ENCODE measurements at regions of chr20 and their contacts with region 1.

Region 1: GRCh38 chr20:46132705-46133120 is 14.6 kb downstream of the CD40 start:
- DNase-seq: peak; percentile 73
- H3K4me3 Mint-ChIP-seq: no peak overlapping the region
- H3K27ac Mint-ChIP-seq: no peak overlapping the region
- H3K4me1 Mint-ChIP-seq: no peaks in the 10 kb centered on the region
- H3K27me3 Mint-ChIP-seq: peaks cover 25% of the 10 kb centered on the region

Region 2: GRCh38 chr20:45545754-45546453 is 586.8 kb before region 1 on chr20:
- CTCF ChIA-PET with region 1: no interaction called
- POLR2A ChIA-PET with region 1: no interaction called
- intact Hi-C with region 1: no loop called
- DNase-seq: no peak
- H3K4me3 Mint-ChIP-seq: no peak overlapping the region
- H3K27ac Mint-ChIP-seq: no peak overlapping the region
- H3K4me1 Mint-ChIP-seq: no peaks in the 10 kb centered on the region
- H3K27me3 Mint-ChIP-seq: peaks cover 29% of the 10 kb centered on the region

Region 3: DNA sequence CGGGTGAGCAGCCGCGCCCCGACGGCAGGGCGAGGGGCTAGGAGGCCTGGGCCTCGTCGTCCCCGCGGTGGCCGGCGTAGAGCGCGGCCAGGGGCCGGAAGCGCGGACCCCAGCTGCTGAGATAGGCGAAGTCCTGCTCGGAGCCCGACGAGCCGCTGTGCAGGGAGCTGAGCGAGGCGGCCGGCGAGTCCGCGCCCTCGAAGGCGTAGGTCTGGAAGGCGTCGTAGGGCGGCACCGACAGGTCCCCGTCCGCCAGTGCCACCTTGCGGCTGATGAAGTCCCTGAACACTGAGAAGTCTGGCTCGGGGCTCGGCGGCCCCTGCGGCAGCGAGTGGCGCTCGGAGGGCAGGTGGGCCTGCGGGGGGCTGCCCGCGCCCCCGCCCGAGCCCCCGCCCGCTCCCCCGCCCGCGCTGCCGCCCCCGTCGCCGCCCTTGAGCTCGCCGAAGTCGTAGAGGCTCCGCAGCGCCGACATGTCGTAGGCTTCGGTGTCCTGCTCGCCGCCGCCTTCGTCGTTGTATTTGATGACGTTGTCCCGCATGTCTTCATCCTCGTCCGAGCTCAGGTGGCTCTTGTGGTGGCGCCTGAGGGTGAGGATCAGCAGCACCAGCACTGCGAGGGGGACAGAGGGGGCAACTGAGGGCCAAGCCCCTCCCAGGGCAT is 41.9 kb after region 1 on chr20:
- CTCF ChIA-PET with region 1: interaction called, 34 read pairs
- POLR2A ChIA-PET with region 1: no interaction called
- intact Hi-C with region 1: no loop called
- DNase-seq: peak; percentile 78
- H3K4me3 Mint-ChIP-seq: no peak overlapping the region
- H3K27ac Mint-ChIP-seq: no peak overlapping the region
- H3K4me1 Mint-ChIP-seq: peaks cover 2% of the 10 kb centered on the region
- H3K27me3 Mint-ChIP-seq: peaks cover 42% of the 10 kb centered on the region

Region 4: GRCh38 chr20:46215913-46216707 is 83.4 kb after region 1 on chr20:
- CTCF ChIA-PET with region 1: no interaction called
- POLR2A ChIA-PET with region 1: no interaction called
- intact Hi-C with region 1: no loop called
- DNase-seq: no peak
- H3K4me3 Mint-ChIP-seq: no peak overlapping the region
- H3K27ac Mint-ChIP-seq: no peak overlapping the region
- H3K4me1 Mint-ChIP-seq: no peaks in the 10 kb centered on the region
- H3K27me3 Mint-ChIP-seq: peaks cover 8% of the 10 kb centered on the region

Region 5: DNA sequence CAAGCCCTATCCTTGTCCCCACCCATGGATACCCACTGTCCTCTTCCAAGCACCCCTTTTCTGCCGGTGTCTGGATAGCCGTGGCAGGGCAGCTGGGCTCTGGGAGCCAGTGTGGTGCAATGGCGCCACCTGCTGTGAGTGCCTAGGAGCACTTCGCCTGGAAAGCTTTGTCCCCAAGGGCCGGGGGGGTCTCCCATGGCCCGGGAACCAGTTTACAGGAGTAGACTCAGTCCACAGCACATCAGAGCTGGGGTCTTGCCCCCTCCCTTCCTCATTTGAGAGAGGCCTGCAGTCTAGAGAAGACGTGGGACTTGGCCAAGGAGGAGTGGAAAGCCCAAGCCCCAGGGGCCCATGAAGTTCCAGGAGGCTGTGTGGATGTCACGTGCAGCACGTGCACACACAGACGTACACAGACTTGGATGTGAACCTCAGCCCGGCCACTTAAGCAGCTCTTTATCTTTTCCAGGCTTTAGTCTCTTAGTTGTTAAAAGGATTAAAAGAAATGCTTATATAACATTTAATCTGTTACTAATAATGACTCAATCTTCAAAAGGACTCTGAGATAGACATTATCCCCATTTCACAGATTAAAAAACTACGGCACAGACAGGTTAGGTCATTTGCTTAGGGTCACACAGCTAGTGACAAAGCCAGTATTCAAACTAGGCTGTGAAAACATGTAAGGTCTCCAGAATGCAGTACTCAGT is 216.5 kb after region 1 on chr20:
- CTCF ChIA-PET with region 1: interaction called, 17 read pairs
- POLR2A ChIA-PET with region 1: no interaction called
- intact Hi-C with region 1: loop called (anchors 5 kb)
- DNase-seq: peak; percentile 65
- H3K4me3 Mint-ChIP-seq: no peak overlapping the region
- H3K27ac Mint-ChIP-seq: no peak overlapping the region
- H3K4me1 Mint-ChIP-seq: peaks cover 23% of the 10 kb centered on the region
- H3K27me3 Mint-ChIP-seq: no peaks in the 10 kb centered on the region